ENCODE measurements at regions of chr11 and their contacts with region 1.

Region 1: GRCh38 chr11:78379039-78379670 is 38.5 kb downstream of the GAB2 start:
- DNase-seq: peak; percentile 31 to 82 (median 70)
- H3K4me3 ChIP-seq: peak overlapping the region in 1 of 7 experiments; percentile 4
- H3K27ac ChIP-seq: no peak overlapping the region
- H3K4me1 ChIP-seq: peaks cover 10 to 23% (median 13%) of the 10 kb centered on the region in 4 experiments
- H3K27me3 ChIP-seq: no peaks in the 10 kb centered on the region

Region 2: GRCh38 chr11:78365381-78365792 is 13.8 kb before region 1 on chr11:
- CTCF ChIA-PET with region 1: interaction called, 21 read pairs
- POLR2A ChIA-PET with region 1: interaction called, 3 read pairs
- DNase-seq: no peak
- H3K4me3 ChIP-seq: no peak overlapping the region
- H3K27ac ChIP-seq: no peak overlapping the region
- H3K4me1 ChIP-seq: peaks cover 0 to 22% (median 9%) of the 10 kb centered on the region in 4 experiments
- H3K27me3 ChIP-seq: no peaks in the 10 kb centered on the region

Measured in common myeloid progenitor, CD34-positive (primary cell).